ENCODE measurements at regions of chr3 and their contacts with region 1.

Region 1: DNA sequence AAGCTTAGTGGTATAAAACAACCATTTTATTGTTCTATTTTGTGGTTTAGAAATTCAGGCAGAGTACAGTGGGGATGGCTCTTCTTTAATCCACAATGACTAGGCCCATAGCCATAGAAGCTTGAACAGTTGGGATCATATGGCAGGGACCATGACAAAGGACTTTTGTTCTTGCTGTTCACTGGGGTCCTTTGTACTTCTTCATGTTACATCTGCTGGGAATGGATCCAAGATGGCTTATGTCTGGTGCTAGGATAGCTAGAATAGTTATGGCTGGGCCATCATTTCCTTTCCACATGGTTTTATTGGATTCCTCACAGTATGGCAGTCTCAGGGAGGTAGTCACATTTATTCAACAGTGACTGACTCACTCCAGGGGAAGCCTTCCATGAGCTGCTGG is 427.9 kb upstream of the AGTR1 start:
- DNase-seq: no peak
- H3K4me3 ChIP-seq: no peak overlapping the region
- H3K27ac ChIP-seq: no peak overlapping the region
- H3K4me1 ChIP-seq: no peaks in the 10 kb centered on the region
- H3K27me3 ChIP-seq: no peaks in the 10 kb centered on the region
- CTCF ChIP-seq: no peak
- POLR2A ChIP-seq: no peak

Region 2: DNA sequence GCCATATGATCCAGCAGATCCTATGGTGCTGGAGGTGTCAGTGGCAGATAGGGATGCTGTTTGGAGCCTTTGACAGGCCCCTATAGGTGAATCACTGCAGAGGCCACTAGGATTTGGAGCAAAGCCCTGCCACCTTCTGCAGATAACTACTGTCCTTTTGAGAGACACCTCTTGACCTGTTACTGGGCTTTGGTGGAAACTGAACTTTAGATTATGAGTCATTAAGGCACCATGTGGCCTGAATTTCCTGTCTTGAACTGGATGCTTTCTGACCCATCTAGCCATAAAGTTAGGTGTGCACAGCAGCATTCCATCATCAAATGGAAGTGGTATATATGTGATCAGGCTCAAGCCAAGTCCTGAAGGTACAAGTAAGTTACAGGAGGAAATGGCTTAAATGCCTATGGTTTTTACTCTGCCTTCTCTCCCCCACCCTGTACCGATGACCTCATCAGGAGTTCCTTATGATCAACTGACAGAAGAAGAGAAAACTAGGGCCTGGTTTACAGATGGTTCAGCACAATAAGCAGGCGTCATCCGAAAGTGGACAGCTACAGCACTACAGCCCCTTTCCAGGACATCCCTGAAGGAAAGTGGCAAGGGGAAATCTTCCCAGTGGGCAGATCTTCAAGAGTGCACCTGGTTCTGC is 137.7 kb before region 1 on chr3:
- intact Hi-C with region 1: loop called (anchors 5 kb)
- DNase-seq: no peak
- H3K4me3 ChIP-seq: no peak overlapping the region
- H3K27ac ChIP-seq: no peak overlapping the region
- H3K4me1 ChIP-seq: no peaks in the 10 kb centered on the region
- H3K27me3 ChIP-seq: no peaks in the 10 kb centered on the region
- CTCF ChIP-seq: no peak
- POLR2A ChIP-seq: no peak